HEK293T (cell line): ENCODE measurements at regions of chr14 and their contacts with region 1.

Region 1: GRCh38 chr14:54935958-54936357 is 33.3 kb upstream of the GCH1 start:
- DNase-seq: no peak

Region 2: DNA sequence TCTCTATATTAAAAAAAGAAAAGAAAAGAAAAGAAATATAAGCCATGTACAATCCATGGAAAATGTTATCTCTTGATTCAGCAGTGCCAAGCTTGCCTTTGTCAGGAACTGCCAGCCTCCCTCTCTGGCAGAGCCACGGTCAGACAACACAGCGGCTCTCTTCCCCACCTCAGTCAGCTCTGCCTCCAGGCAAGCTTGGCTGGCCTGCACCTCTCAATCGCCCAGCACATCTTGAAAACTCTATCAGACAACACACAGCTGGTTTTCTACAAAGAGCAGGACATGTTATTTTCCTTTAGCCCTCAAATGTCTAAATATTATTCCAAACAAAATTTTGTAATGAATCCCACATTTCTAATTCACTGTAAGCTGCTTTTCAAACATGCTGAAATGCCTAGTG is 13.4 kb before region 1 on chr14:
- CTCF ChIA-PET with region 1: interaction called, 11 read pairs
- POLR2A ChIA-PET with region 1: no interaction called
- DNase-seq: no peak